PC-9 (cell line): ENCODE measurements at regions of chr20 and their contacts with region 1.

Region 1: DNA sequence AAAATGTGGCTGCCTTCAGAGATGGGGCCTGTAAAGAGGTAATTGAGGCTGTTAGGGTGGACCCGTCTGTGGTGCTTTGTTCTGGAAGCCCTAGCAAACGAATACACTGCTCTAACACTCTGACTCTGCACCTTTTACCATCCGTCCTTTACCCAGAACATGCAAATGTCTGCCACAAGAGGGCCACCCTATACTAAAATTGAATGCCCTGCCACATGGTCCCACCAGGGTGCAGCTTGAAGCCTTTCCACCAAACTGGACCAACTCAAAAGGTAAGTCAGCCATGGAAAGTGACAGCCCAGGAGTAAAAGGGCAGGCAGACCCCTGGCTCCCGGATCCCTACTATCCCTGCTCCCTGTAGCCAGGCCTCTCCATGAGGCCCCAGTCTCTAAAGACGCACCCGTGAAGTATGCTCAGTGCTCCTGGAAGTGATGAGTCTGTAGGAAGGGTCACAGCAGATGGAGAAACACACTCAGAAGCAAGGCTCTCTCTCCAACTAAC is 5.8 kb upstream of the BFSP1 start:
- DNase-seq: peak; percentile 61 to 74
- H3K4me3 ChIP-seq: no peak overlapping the region
- H3K27ac ChIP-seq: no peak overlapping the region
- H3K4me1 ChIP-seq: peaks cover 38% of the 10 kb centered on the region
- H3K27me3 ChIP-seq: no peaks in the 10 kb centered on the region
- CTCF ChIP-seq: peak; percentile 93

Region 2: DNA sequence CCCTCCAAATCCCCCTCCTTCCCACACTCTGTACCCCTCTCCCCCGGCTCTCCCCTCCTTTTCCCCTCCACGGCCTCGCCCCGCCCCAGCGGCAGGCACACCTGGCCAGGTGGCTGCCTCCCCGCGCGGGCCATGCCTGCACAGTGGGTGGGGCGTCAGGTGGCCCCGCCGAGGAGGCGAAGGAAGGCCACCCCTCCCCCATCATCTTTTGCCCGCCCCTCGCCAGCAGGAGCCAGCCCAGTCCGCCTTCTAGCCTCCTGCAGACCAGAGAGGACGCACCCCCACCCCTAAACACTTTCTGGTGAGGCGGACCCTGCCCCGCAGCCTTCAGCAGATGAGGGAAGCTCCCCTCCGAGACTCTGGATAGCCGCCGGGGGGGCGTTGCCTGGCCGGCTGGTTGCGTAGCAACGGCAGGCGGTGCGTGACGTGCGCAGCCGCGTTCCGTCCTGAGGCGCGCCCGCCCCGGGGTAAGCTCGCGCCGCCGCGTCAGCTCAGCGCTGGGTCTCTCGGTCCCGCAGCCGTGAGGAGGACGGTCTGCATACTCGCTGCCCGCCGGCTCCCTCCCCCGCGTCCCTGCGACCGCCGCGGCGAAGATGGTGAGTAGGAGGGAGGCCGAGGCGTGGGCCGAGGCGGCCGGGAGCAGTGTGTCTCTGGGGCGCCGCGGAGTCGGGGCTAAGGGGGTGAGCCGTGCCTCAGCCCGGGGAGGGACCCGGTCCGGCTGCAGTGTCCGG is 32.8 kb after region 1 on chr20 and contains the start of gene DSTN:
- CTCF ChIA-PET with region 1: interaction called, 4 read pairs
- POLR2A ChIA-PET with region 1: interaction called, 9 read pairs
- intact Hi-C with region 1: loop called (anchors 1 kb)
- DNase-seq: peak; percentile 91 to 97
- H3K4me3 ChIP-seq: peak within 1 kb of the TSS; percentile 95
- H3K27ac ChIP-seq: peak within 1 kb of the TSS; percentile 84
- H3K4me1 ChIP-seq: peaks cover 54% of the 10 kb centered on the region
- H3K27me3 ChIP-seq: no peaks in the 10 kb centered on the region
- CTCF ChIP-seq: no peak
- total RNA-seq, gene DSTN: 296 and 366 TPM in 2 replicates

Region 3: DNA sequence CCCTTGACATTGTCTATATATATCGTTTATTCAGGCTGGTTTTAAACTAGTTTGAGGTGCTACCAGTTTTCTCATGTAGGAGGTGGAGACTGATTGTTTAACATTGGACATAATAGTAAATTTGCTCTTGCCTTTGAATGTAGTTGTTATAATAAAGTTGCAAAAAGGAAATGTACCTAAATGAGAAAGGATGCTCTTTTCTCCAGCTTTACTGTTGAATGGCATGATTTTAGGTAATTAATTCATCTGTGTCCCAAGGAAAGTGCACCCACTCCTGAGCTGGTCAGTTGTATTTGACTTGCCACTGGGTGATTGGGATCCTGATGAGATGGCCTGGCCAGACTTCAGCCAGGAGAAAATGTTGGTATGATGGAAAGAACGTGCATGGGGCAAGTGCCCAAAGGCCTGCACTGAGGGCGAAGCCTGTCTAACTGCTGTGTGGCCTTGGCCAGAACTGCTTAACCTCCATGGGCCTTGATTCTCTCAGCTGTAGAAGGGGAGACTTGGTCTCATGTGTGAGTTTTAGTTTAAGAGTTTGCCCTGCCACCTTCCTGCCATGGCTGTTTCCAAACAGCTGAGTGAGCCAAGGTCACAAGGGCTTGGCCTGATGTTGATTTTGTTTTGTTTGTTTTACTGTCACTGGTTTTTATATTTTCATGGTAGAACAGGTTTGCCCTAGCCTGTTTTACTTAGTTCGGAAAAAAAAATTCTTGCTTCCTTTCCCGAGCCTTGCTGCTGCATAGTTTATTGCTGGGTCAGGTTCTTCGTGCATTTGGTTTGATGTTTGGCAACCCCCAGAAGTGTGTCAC is 68.1 kb after region 1 on chr20:
- CTCF ChIA-PET with region 1: no interaction called
- POLR2A ChIA-PET with region 1: no interaction called
- intact Hi-C with region 1: loop called (anchors 1 kb)
- DNase-seq: peak; percentile 41 to 82
- H3K4me3 ChIP-seq: no peak overlapping the region
- H3K27ac ChIP-seq: peak overlapping the region; percentile 40
- H3K4me1 ChIP-seq: peaks cover 31% of the 10 kb centered on the region
- H3K27me3 ChIP-seq: no peaks in the 10 kb centered on the region
- CTCF ChIP-seq: no peak

Region 4: DNA sequence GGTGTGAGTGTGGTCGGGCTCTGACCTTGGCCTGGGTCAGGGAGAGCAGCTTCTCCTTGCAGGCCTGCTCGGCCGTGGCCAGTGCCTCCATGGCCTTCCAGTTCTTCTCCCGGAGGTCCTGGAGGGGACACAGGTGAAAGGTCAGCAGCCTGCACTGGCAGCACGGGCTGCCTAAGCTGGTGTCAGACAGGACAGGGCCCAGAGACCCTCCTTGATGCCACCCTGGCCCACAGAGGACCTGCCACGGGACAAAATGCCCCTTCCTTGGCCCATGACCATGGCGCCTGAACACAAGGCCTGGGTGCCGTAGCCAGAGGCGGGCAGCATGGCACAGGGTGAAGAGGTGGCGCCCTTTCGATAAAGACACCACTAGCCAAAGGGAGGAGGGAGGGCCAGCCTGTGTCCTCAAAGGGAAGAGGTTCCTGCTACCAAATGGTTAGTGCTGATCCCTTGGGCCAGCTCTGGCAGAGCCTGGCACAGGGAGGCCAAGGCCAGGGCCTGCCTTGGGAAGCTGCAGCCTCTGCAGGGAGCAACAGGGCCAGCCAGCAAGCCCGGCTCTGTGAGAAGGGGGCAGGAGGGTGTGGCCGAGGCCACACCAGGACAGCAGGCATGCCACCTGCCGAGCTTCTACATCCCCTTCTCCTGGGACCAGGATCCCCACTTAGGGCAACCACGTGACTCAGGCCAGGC is 87.7 kb after region 1 on chr20:
- CTCF ChIA-PET with region 1: no interaction called
- POLR2A ChIA-PET with region 1: no interaction called
- intact Hi-C with region 1: no loop called
- DNase-seq: no peak
- H3K4me3 ChIP-seq: no peak overlapping the region
- H3K27ac ChIP-seq: no peak overlapping the region
- H3K4me1 ChIP-seq: no peaks in the 10 kb centered on the region
- H3K27me3 ChIP-seq: no peaks in the 10 kb centered on the region
- CTCF ChIP-seq: no peak

Region 5: DNA sequence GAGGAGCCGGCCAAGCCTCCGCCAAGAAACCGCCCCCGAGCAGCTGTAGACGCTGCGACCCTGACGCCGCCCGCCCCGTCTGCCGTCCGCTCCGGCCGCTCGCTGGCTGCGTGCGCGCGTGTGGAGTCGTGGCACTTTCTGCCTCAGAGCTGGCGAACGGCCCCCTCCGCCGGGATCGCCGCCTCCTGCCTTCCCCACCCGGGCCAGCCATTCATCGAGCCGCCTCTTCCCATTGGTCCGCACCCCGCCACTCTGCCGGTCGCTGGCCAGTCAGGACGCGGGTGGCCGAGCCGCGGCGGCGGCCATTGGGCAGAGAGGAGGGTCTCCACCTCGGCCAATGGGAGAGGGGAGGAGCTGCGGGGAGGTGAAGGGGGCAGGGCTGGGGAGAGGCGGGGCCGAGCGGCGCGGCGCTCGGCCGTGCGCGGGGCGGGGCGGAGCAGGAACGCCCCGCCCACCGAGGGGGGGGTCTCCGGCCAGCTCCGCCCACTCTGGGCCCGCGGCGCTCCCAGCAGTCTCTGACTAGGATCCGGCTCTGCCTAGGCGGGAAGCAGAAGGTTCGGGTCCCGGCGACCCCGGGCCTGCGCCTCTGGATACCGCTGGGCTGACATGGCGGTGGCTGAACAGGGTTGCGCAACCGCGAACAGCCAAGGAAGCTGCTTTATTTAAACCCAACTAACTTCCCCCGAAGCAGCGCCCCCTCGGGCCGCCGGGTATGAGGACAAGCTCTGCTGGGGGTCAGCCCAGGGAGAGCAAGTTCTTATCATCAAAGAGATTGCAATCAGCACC is 145.3 kb after region 1 on chr20 and contains the start of gene RRBP1:
- CTCF ChIA-PET with region 1: no interaction called
- POLR2A ChIA-PET with region 1: no interaction called
- intact Hi-C with region 1: loop called (anchors 5 kb)
- DNase-seq: peak; percentile 85 to 99
- H3K4me3 ChIP-seq: peak within 1 kb of the TSS; percentile 66
- H3K27ac ChIP-seq: peak within 1 kb of the TSS; percentile 37; the same call in 1 of the 2 replicates
- H3K4me1 ChIP-seq: peaks cover 24% of the 10 kb centered on the region
- H3K27me3 ChIP-seq: peaks cover 41% of the 10 kb centered on the region
- CTCF ChIP-seq: peak; percentile 86
- total RNA-seq, gene RRBP1: 144 and 156 TPM in 2 replicates

Region 6: DNA sequence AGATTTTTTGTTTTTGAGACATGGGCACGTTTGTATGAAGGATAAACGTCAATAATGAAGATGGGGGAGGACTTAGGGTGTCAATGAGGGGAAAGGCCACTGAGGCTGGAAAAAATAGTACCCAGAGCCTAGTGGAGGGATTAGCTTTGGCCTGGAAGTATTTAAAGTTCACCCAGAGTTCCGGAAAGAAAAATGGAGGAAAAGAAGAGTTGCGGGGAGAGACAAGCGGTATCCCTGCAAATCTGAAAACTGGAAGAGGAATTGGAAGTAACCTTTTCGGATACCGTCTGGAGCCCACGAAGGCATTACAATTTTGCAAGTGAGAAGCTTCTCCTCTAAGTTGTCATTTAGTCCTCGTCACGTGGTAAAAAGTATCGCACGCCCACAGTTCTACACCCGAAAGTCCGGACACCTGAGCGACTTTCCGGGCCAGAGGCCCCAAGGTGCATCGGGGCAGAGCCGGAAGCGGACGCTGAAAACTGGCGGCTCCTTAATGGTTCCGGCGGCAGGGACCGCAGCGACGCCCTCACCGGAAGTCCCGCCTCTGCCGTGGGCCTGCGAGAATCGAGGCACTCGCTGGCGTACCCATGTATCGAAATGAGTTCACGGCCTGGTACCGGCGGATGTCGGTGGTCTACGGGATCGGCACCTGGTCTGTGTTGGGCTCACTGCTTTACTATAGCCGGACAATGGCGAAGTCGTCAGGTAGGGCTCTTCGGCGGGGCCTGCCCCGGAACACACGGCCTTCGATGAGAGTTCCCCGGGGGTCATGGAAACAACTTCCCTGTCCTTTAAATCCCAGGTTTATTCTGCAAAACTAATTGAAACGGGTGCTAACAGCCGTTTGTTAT is 1030.1 kb after region 1 on chr20 and contains the start of gene SMIM26:
- CTCF ChIA-PET with region 1: no interaction called
- POLR2A ChIA-PET with region 1: interaction called, 14 read pairs
- intact Hi-C with region 1: no loop called
- DNase-seq: peak; percentile 88 to 92
- H3K4me3 ChIP-seq: peak within 1 kb of the TSS; percentile 81
- H3K27ac ChIP-seq: peak within 1 kb of the TSS; percentile 74
- H3K4me1 ChIP-seq: 0 out of 2 replicates have a peak, but pooled peaks cover 7% of the 10 kb centered on the region
- H3K27me3 ChIP-seq: no peaks in the 10 kb centered on the region
- CTCF ChIP-seq: no peak
- total RNA-seq, gene SMIM26: 105 and 114 TPM in 2 replicates